HCT116 (cell line): ENCODE measurements at regions of chr2 and their contacts with region 1.

Region 1: GRCh38 chr2:226649871-226650660 is 149.6 kb downstream of the IRS1 start:
- DNase-seq: peak; percentile 97
- ATAC-seq: peak; percentile 71
- H3K4me3 ChIP-seq: peak overlapping the region in 1 of 2 experiments; percentile 8; a peak in 1 of 4 replicates
- H3K27ac ChIP-seq: peak overlapping the region; percentile 98
- H3K4me1 ChIP-seq: peaks cover 57 to 93% of the 10 kb centered on the region in 2 experiments
- H3K27me3 ChIP-seq: no peaks in the 10 kb centered on the region
- CTCF ChIP-seq: no peak
- POLR2A ChIP-seq: no peak
- RAD21 ChIP-seq: no peak

Region 2: GRCh38 chr2:225668606-225669266 is 981.3 kb before region 1 on chr2:
- CTCF ChIA-PET with region 1: no interaction called
- POLR2A ChIA-PET with region 1: interaction called, 4 read pairs
- RAD21 ChIA-PET with region 1: no interaction called
- intact Hi-C with region 1: loop called (anchors 5 kb)
- DNase-seq: peak; percentile 72
- ATAC-seq: peak; percentile 79
- H3K4me3 ChIP-seq: no peak overlapping the region
- H3K27ac ChIP-seq: peak overlapping the region; percentile 67; the same call in 1 of the 2 replicates
- H3K4me1 ChIP-seq: peaks cover 21 to 32% of the 10 kb centered on the region in 2 experiments
- H3K27me3 ChIP-seq: no peaks in the 10 kb centered on the region
- CTCF ChIP-seq: peak; percentile 74 to 91 (median 80)
- POLR2A ChIP-seq: no peak
- RAD21 ChIP-seq: peak; percentile 86

Region 3: DNA sequence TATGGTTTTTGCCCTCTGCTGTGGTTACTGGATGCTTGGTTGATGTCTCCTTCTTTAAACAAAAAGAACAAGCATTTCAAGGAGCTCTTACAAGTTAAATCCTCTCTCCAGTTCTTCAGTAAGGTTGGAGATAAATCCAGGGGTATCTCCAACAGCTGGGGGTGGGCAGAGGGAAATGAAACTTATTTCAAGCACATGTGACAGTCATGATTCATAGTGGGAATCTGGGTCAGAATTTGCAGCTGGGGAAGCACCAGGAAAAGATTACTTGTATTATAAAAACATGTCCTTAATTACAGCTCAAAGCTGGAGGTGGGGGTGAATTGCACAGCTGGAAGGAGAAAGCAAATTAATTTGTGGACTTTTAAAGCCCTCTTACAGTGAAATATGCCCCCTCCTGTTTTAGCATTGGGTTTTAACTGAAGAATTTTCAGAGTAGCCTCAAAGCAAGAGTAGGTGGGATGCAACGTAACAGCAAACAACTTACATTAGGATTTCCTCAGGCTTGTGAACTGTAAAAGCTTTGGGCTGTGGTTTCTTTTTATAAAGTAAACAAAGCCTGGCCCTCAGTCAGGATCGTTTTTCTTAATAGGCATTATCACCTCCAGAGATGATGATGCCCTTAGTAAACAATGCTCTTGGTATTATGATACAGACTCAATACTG is 654.1 kb before region 1 on chr2:
- CTCF ChIA-PET with region 1: no interaction called
- POLR2A ChIA-PET with region 1: no interaction called
- RAD21 ChIA-PET with region 1: no interaction called
- intact Hi-C with region 1: no loop called
- DNase-seq: no peak
- ATAC-seq: no peak
- H3K4me3 ChIP-seq: no peak overlapping the region
- H3K27ac ChIP-seq: peak overlapping the region; percentile 8; the same call in 1 of the 2 replicates
- H3K4me1 ChIP-seq: peaks cover 4 to 23% of the 10 kb centered on the region in 2 experiments; a peak in 2 of 4 replicates
- H3K27me3 ChIP-seq: no peaks in the 10 kb centered on the region
- CTCF ChIP-seq: no peak
- POLR2A ChIP-seq: no peak
- RAD21 ChIP-seq: no peak

Region 4: GRCh38 chr2:226185616-226186211 is 464.4 kb before region 1 on chr2:
- CTCF ChIA-PET with region 1: no interaction called
- POLR2A ChIA-PET with region 1: interaction called, 16 read pairs
- RAD21 ChIA-PET with region 1: interaction called in 1 of 2 experiments, 3 read pairs
- intact Hi-C with region 1: loop called (anchors 5 kb)
- DNase-seq: peak; percentile 84
- ATAC-seq: peak; percentile 68
- H3K4me3 ChIP-seq: peak overlapping the region; percentile 22 to 45; a peak in 3 of 4 replicates
- H3K27ac ChIP-seq: peak overlapping the region; percentile 95
- H3K4me1 ChIP-seq: peaks cover 82 to 100% of the 10 kb centered on the region in 2 experiments
- H3K27me3 ChIP-seq: no peaks in the 10 kb centered on the region
- CTCF ChIP-seq: peak in 1 of 3 experiments; percentile 14; a peak in 2 of 6 replicates
- POLR2A ChIP-seq: no peak
- RAD21 ChIP-seq: peak; percentile 40

Region 5: GRCh38 chr2:226423498-226423960 is 226.5 kb before region 1 on chr2:
- CTCF ChIA-PET with region 1: no interaction called
- POLR2A ChIA-PET with region 1: interaction called, 4 read pairs
- RAD21 ChIA-PET with region 1: no interaction called
- intact Hi-C with region 1: loop called (anchors 5 kb)
- DNase-seq: no peak
- ATAC-seq: peak; percentile 57
- H3K4me3 ChIP-seq: peak overlapping the region in 1 of 2 experiments; percentile 35; a peak in 2 of 4 replicates
- H3K27ac ChIP-seq: peak overlapping the region; percentile 86
- H3K4me1 ChIP-seq: peaks cover 61% of the 10 kb centered on the region in 2 experiments
- H3K27me3 ChIP-seq: no peaks in the 10 kb centered on the region
- CTCF ChIP-seq: no peak
- POLR2A ChIP-seq: no peak
- RAD21 ChIP-seq: no peak; the same call in 1 of the 2 replicates

Region 6: DNA sequence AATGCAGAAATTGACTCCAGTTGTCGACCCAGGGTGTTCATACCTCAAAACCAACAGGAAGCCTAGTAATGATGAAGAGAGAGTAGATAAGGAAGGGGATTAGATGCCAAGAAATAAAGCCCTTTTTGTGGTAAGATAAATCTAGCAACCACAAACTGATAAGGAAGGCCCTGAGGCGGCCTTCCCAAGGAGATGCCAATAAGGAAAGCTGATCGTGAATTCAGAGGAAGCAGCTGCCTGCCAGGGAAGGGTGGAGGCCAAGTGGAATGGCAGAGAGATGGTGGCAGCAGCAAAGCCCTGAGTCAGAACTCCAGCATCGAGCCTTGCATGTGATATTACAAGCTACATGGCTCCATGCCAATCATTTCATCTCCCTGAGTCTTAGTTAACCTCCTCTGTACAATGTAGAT is 23.3 kb after region 1 on chr2:
- CTCF ChIA-PET with region 1: interaction called, 3 read pairs
- POLR2A ChIA-PET with region 1: interaction called, 35 read pairs
- RAD21 ChIA-PET with region 1: interaction called in 1 of 2 experiments, 3 read pairs
- intact Hi-C with region 1: no loop called
- DNase-seq: peak; percentile 98
- ATAC-seq: peak; percentile 90
- H3K4me3 ChIP-seq: no peak overlapping the region
- H3K27ac ChIP-seq: peak overlapping the region; percentile 98
- H3K4me1 ChIP-seq: peaks cover 59 to 75% of the 10 kb centered on the region in 2 experiments
- H3K27me3 ChIP-seq: no peaks in the 10 kb centered on the region
- CTCF ChIP-seq: no peak
- POLR2A ChIP-seq: no peak
- RAD21 ChIP-seq: peak; percentile 56

Region 7: GRCh38 chr2:226963528-226963927 is 313.5 kb after region 1 on chr2:
- CTCF ChIA-PET with region 1: no interaction called
- POLR2A ChIA-PET with region 1: no interaction called
- RAD21 ChIA-PET with region 1: no interaction called
- intact Hi-C with region 1: no loop called
- DNase-seq: peak; percentile 44
- ATAC-seq: peak; percentile 92
- H3K4me3 ChIP-seq: peak overlapping the region in 1 of 2 experiments; percentile 6; a peak in 1 of 4 replicates
- H3K27ac ChIP-seq: peak overlapping the region; percentile 66
- H3K4me1 ChIP-seq: peaks cover 18 to 20% of the 10 kb centered on the region in 2 experiments
- H3K27me3 ChIP-seq: no peaks in the 10 kb centered on the region
- CTCF ChIP-seq: no peak
- POLR2A ChIP-seq: no peak
- RAD21 ChIP-seq: no peak

Region 8: GRCh38 chr2:226995625-226996041 is 345.6 kb after region 1 on chr2:
- CTCF ChIA-PET with region 1: no interaction called
- POLR2A ChIA-PET with region 1: no interaction called
- RAD21 ChIA-PET with region 1: no interaction called
- intact Hi-C with region 1: loop called (anchors 1 kb)
- DNase-seq: peak; percentile 99
- ATAC-seq: peak; percentile 90
- H3K4me3 ChIP-seq: peak overlapping the region in 1 of 2 experiments; percentile 24; a peak in 3 of 4 replicates
- H3K27ac ChIP-seq: peak overlapping the region; percentile 88
- H3K4me1 ChIP-seq: peaks cover 33 to 37% of the 10 kb centered on the region in 2 experiments
- H3K27me3 ChIP-seq: no peaks in the 10 kb centered on the region
- CTCF ChIP-seq: no peak
- POLR2A ChIP-seq: no peak
- RAD21 ChIP-seq: 0 out of 2 replicates have a peak, but pooled peaks have one; percentile 24

Region 9: GRCh38 chr2:228318218-228318617 is 1668.2 kb after region 1 on chr2:
- CTCF ChIA-PET with region 1: no interaction called
- POLR2A ChIA-PET with region 1: no interaction called
- RAD21 ChIA-PET with region 1: no interaction called
- intact Hi-C with region 1: no loop called
- DNase-seq: peak; percentile 27
- ATAC-seq: peak; percentile 90
- H3K4me3 ChIP-seq: no peak overlapping the region
- H3K27ac ChIP-seq: no peak overlapping the region
- H3K4me1 ChIP-seq: no peaks in the 10 kb centered on the region
- H3K27me3 ChIP-seq: no peaks in the 10 kb centered on the region
- CTCF ChIP-seq: peak; percentile 34 to 75 (median 70); a peak in 5 of 6 replicates
- POLR2A ChIP-seq: no peak
- RAD21 ChIP-seq: peak; percentile 60